ENCODE measurements at regions of chr19 and their contacts with region 1.

Region 1: GRCh38 chr19:40465557-40466150 is at the start of gene BLVRB:
- DNase-seq: peak; percentile 99 to 100
- H3K4me3 ChIP-seq: peak within 1 kb of the TSS; percentile 73
- H3K4me3 Mint-ChIP-seq: peak within 1 kb of the TSS; percentile 79
- H3K27ac Mint-ChIP-seq: peak within 1 kb of the TSS; percentile 92
- H3K4me1 ChIP-seq: peaks cover 20% of the 10 kb centered on the region
- H3K4me1 Mint-ChIP-seq: peaks cover 20% of the 10 kb centered on the region
- H3K27me3 ChIP-seq: no peaks in the 10 kb centered on the region
- H3K27me3 Mint-ChIP-seq: peaks cover 4% of the 10 kb centered on the region
- CTCF ChIP-seq: no peak
- total RNA-seq, gene BLVRB: 75.2 and 101 TPM in 2 replicates

Region 2: DNA sequence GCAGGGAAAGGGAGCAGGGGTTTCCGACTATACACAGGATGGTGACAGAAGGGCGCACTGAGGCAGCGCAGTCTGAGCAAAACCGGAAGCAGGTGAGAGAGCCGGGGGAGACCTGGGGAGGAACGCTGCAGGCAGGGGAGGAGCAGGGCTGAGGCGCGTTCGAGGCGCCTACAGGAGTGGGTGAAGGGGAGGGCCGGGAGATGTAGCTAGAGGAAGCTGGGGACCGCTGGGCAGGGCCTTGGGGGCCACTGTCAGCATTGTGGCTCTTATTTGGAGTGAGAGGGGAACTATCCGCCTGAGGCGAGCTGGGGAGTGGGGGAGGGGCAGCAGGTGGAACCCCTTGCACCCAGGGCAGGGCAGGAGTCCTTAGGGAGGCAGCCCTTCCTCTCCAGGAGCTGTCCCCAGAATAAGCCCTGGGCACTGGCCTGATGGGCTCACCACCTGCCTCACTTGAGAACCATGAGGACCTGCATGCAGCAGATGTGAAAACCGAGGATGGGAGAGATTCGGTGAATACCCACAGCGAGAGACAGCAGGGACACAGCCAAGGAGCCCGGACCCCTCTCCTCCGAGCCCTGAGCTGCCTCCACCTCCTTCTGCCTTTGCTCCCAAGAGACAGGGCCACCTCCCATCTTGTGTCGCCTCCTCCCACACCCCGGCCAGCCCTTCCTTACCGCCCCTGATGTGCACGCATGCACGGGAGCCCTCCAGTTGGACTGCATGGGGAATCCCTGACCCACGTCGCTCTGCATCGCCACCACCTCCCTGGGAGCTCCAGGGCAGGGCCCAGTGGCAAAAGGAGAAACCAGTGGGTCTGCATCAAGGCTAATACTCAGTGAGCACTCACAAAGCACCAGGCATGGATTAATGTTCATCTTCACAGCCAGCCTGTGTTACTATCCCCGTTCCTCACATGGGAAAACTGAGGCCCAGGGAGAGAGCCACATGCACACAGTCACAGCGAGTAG is 190.8 kb before region 1 on chr19:
- CTCF ChIA-PET with region 1: no interaction called
- POLR2A ChIA-PET with region 1: no interaction called
- intact Hi-C with region 1: no loop called
- DNase-seq: no peak
- H3K4me3 ChIP-seq: no peak overlapping the region
- H3K4me3 Mint-ChIP-seq: no peak overlapping the region
- H3K27ac Mint-ChIP-seq: no peak overlapping the region
- H3K4me1 ChIP-seq: no peaks in the 10 kb centered on the region
- H3K4me1 Mint-ChIP-seq: no peaks in the 10 kb centered on the region
- H3K27me3 ChIP-seq: no peaks in the 10 kb centered on the region
- H3K27me3 Mint-ChIP-seq: no peaks in the 10 kb centered on the region
- CTCF ChIP-seq: no peak

Region 3: GRCh38 chr19:40398417-40399131 is 67.1 kb before region 1 on chr19:
- CTCF ChIA-PET with region 1: no interaction called
- POLR2A ChIA-PET with region 1: no interaction called
- intact Hi-C with region 1: no loop called
- DNase-seq: peak; percentile 75 to 86
- H3K4me3 ChIP-seq: peak overlapping the region; percentile 39
- H3K4me3 Mint-ChIP-seq: peak overlapping the region; percentile 54
- H3K27ac Mint-ChIP-seq: no peak overlapping the region
- H3K4me1 ChIP-seq: peaks cover 5% of the 10 kb centered on the region; the same call in 1 of the 2 replicates
- H3K4me1 Mint-ChIP-seq: peaks cover 16% of the 10 kb centered on the region
- H3K27me3 ChIP-seq: no peaks in the 10 kb centered on the region
- H3K27me3 Mint-ChIP-seq: no peaks in the 10 kb centered on the region
- CTCF ChIP-seq: no peak

Region 4: GRCh38 chr19:40444192-40445028 is 21.2 kb before region 1 on chr19 and contains the start of gene SERTAD3:
- CTCF ChIA-PET with region 1: interaction called, 17 read pairs
- POLR2A ChIA-PET with region 1: interaction called, 17 read pairs
- intact Hi-C with region 1: loop called (anchors 1 kb)
- DNase-seq: peak; percentile 97 to 99
- H3K4me3 ChIP-seq: peak within 1 kb of the TSS; percentile 90
- H3K4me3 Mint-ChIP-seq: peak within 1 kb of the TSS; percentile 97
- H3K27ac Mint-ChIP-seq: peak within 1 kb of the TSS; percentile 98
- H3K4me1 ChIP-seq: peaks cover 23% of the 10 kb centered on the region
- H3K4me1 Mint-ChIP-seq: peaks cover 9% of the 10 kb centered on the region
- H3K27me3 ChIP-seq: no peaks in the 10 kb centered on the region
- H3K27me3 Mint-ChIP-seq: no peaks in the 10 kb centered on the region
- CTCF ChIP-seq: peak in 1 of 2 experiments; percentile 61
- total RNA-seq, gene SERTAD3: 45.2 and 52.2 TPM in 2 replicates

Region 5: DNA sequence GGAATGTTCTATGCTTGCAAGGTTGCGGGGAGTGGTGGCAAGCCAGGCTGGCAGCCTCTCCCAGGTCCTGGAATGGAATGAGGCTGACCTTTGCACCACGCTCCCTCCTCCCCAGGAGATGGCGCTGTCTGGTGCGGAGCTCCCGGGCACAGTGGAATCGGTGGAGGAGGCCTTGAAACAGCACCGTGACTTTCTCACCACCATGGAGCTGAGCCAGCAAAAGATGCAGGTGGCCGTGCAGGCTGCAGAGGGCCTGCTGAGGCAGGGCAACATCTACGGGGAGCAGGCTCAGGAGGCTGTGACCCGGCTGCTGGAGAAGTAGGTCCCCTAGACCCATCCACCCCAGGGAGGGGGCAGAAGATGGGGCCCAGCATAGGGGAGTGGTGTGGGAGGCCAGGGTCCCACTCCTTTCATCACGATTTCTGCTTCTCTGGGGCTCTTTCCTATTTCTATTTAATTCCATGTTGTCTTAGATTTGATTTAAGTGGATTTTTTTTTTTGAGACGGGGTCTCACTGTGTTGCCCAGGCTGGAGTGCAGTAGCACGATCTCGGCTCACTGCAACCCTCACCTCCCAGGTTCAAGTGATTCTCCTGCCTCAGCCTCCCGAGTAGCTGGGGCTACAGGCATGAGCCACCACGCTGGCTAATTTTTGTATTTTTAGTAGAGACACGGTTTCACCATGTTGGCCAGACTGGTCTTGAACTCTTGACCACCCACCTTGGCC is 57.8 kb after region 1 on chr19:
- CTCF ChIA-PET with region 1: interaction called, 11 read pairs
- POLR2A ChIA-PET with region 1: no interaction called
- intact Hi-C with region 1: loop called (anchors 5 kb)
- DNase-seq: peak; percentile 86 to 89
- H3K4me3 ChIP-seq: no peak overlapping the region
- H3K4me3 Mint-ChIP-seq: no peak overlapping the region
- H3K27ac Mint-ChIP-seq: no peak overlapping the region
- H3K4me1 ChIP-seq: 0 out of 2 replicates have a peak, but pooled peaks cover 6% of the 10 kb centered on the region
- H3K4me1 Mint-ChIP-seq: no peaks in the 10 kb centered on the region
- H3K27me3 ChIP-seq: no peaks in the 10 kb centered on the region
- H3K27me3 Mint-ChIP-seq: peaks cover 3% of the 10 kb centered on the region
- CTCF ChIP-seq: peak; percentile 67 to 75

Region 6: DNA sequence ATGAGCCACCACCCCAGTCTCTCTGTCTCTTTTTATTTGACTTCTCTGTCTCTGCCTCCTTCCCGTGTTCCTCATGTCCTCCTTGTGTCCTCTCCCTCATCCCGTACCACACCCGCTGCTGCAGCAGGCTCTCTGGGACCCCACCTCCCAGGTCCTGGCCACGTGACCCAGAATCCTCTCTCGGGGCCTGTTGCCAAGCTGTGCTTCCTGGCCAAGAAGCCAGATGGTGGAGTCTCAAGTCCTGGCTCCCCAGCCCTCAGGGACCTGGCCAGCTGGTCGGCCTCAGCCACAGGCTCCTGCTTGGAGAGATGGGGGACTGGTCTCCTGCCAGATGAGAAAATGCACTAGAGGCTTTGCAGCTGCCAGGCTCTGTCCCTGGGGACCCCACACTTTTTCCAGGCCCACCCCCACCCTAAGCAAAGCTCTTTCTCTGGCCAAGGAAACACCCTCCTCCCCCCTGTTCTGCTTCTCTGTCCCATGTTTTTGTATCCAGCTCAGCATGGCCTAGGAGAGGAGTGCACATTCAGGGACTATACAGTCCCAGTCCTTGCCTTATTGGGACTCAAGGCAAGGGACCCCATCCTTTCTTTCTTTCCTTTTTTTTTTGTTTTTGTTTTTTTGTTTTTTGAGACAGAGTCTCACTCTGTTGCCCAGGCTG is 76.7 kb after region 1 on chr19:
- CTCF ChIA-PET with region 1: interaction called, 10 read pairs
- POLR2A ChIA-PET with region 1: no interaction called
- intact Hi-C with region 1: no loop called
- DNase-seq: no peak
- H3K4me3 ChIP-seq: no peak overlapping the region
- H3K4me3 Mint-ChIP-seq: no peak overlapping the region
- H3K27ac Mint-ChIP-seq: no peak overlapping the region
- H3K4me1 ChIP-seq: no peaks in the 10 kb centered on the region
- H3K4me1 Mint-ChIP-seq: no peaks in the 10 kb centered on the region
- H3K27me3 ChIP-seq: no peaks in the 10 kb centered on the region
- H3K27me3 Mint-ChIP-seq: peaks cover 2% of the 10 kb centered on the region
- CTCF ChIP-seq: no peak

Measured in Caco-2 (cell line).